HEK293T (cell line): ENCODE measurements at regions of chr11 and their contacts with region 1.

Region 1: GRCh38 chr11:67382276-67383136 is 9.1 kb upstream of the CLCF1 start:
- DNase-seq: peak; percentile 84

Region 2: DNA sequence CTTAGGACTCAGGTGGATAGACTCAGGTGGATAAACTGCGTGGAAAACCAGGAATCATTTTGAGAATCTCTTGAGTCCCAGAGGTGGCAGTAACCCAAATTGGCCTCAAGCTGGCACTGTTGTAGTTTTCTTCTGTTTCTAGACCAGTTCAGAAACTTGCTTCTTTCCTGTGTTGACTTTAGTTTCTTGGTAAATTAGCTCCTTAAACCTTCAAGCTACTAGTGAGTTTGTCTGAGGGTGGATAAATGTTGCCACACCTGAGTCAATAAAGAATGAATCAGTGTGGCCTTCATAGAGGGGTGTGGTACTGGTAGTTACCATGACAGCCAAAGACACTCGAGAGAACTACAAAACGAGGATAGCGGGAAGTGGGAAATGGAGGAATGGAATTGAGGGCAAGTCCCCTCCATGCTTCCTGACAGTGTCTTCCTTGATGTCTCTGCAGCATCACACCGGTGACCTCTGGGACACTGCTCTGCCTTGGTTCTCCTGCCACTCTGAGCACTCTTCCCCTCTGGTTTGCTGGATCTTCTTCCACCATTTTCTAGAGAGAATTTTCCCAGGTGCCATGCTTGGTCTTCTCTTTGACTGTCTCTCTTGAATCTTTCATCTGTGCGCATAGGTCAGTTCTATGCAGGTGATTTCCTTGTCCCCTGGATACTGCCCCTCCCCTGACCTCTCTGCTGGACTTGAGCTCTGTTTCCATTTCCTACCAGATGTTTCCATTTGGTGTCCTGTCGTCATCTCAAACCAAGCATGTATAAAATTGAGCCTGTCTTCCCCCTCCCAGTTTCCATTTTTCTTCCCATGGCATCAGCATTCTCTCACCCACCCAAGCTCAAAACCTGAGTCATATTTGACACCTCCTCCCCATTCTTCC is 36.3 kb before region 1 on chr11:
- CTCF ChIA-PET with region 1: interaction called, 182 read pairs
- POLR2A ChIA-PET with region 1: no interaction called
- DNase-seq: no peak

Region 3: DNA sequence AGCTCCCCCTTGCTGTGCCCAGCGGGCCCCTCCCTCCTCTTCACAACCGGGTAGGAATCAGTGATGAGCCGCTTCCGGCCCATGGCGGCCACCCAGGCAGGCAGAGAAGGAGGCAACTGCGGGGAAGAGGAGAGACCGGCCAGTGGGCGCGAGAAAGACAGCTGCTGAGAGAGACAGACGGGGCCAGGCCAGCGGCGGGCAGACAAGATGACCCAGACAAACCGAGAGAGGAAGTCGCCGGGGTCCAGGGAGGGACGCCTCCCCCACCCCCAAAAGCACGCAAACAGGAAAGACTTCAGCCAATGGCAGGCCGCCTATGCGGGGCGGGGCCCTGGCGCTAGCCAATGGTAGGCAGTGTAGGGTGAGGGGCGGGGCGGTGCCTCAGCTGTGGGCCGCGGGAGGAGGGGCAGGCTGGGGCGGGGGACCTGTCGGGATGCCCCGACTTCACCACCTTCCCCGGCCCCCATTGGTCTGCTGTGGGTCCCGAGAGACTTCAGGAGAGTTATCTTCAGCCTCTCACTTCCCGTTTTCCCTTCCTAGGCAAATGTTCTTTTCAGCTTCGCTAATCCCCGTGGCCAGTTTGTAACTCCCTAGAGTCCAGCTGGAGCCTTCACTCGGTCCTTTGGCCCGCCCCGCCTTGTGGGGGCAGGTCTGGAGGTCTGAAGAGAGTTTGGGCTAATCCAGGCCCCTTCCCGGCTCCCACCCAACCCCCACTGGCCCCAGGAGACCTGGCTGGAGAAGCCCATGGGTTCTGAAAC is 29.0 kb before region 1 on chr11 and contains the start of gene POLD4:
- CTCF ChIA-PET with region 1: interaction called, 182 read pairs
- POLR2A ChIA-PET with region 1: interaction called, 9 read pairs
- DNase-seq: peak; percentile 93

Region 4: GRCh38 chr11:67371212-67371910 is 11.1 kb before region 1 on chr11:
- CTCF ChIA-PET with region 1: interaction called, 25 read pairs
- POLR2A ChIA-PET with region 1: interaction called, 10 read pairs
- DNase-seq: peak; percentile 65